IMR-90 (cell line): ENCODE measurements at regions of chr4 and their contacts with region 1.

Region 1: DNA sequence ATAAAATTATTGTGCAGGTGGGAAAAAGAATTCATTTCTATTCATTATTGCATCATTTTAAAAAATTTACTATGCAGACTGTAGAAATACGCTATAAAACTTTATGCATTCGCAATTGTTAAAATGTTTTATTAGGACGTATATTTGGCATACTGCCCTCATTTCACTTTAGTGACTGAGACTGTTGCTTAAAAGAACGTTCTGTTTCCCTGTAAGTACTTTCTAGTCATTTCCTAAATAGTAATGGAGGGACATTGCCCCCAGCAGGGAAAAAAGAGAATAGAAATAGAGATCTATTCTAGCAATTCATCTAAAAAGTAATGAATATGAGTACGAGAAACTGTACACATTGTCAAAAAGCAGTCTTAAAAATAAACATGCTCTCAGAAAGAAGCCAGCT is 1295.8 kb upstream of the TENM3 start:
- DNase-seq: peak; percentile 44
- ATAC-seq: peak; percentile 46
- H3K4me3 ChIP-seq: no peak overlapping the region
- H3K27ac ChIP-seq: no peak overlapping the region
- H3K4me1 ChIP-seq: no peaks in the 10 kb centered on the region
- H3K27me3 ChIP-seq: no peaks in the 10 kb centered on the region
- CTCF ChIP-seq: peak; percentile 52
- POLR2A ChIP-seq: no peak
- RAD21 ChIP-seq: peak; percentile 61

Region 2: DNA sequence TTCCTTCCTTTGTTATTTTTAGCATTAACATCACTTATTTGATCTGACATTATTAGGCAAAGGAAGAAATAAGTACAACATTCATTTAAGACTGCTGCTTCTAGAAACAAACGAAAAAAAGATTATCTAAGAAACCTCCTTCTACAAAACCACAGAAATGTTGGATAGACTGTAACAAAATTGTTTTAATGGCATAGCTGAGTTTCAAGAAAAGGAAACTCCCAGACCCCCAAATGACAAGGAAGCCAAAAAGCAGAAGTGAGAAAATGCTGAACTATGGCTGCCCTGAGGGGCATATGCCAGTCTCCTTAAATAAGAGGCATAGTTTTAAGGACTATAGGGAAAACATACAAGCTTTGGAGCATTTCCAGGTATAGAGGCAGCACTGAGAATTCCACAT is 135.9 kb before region 1 on chr4:
- CTCF ChIA-PET with region 1: no interaction called
- POLR2A ChIA-PET with region 1: no interaction called
- dilution Hi-C with region 1: no loop called
- in situ Hi-C with region 1: no loop called
- intact Hi-C with region 1: no loop called
- DNase-seq: no peak
- ATAC-seq: no peak
- H3K4me3 ChIP-seq: no peak overlapping the region
- H3K27ac ChIP-seq: no peak overlapping the region
- H3K4me1 ChIP-seq: no peaks in the 10 kb centered on the region
- H3K27me3 ChIP-seq: no peaks in the 10 kb centered on the region
- CTCF ChIP-seq: no peak
- POLR2A ChIP-seq: no peak
- RAD21 ChIP-seq: no peak

Region 3: GRCh38 chr4:180909279-180909678 is 38.1 kb before region 1 on chr4:
- CTCF ChIA-PET with region 1: no interaction called
- POLR2A ChIA-PET with region 1: no interaction called
- dilution Hi-C with region 1: no loop called
- in situ Hi-C with region 1: no loop called
- intact Hi-C with region 1: loop called (anchors 1 kb)
- DNase-seq: peak; percentile 22
- ATAC-seq: peak; percentile 37; the same call in 1 of the 2 replicates
- H3K4me3 ChIP-seq: no peak overlapping the region
- H3K27ac ChIP-seq: no peak overlapping the region
- H3K4me1 ChIP-seq: no peaks in the 10 kb centered on the region
- H3K27me3 ChIP-seq: no peaks in the 10 kb centered on the region
- CTCF ChIP-seq: peak; percentile 38
- POLR2A ChIP-seq: no peak
- RAD21 ChIP-seq: peak; percentile 52